ENCODE measurements at regions of chr19 and their contacts with region 1.

Region 1: GRCh38 chr19:53808710-53809125 is 15.4 kb downstream of the NLRP12 start:
- DNase-seq: no peak
- H3K4me3 ChIP-seq: no peak overlapping the region
- H3K27ac ChIP-seq: no peak overlapping the region
- H3K4me1 ChIP-seq: no peaks in the 10 kb centered on the region; a peak in 1 of 7 replicates
- H3K27me3 ChIP-seq: peaks cover 0 to 5% (median 1%) of the 10 kb centered on the region in 4 experiments; a peak in 4 of 7 replicates
- CTCF ChIP-seq: peak in 2 of 3 experiments; percentile 68 to 77; a peak in 3 of 4 replicates
- EP300 ChIP-seq: no peak
- POLR2A ChIP-seq: no peak
- RAD21 ChIP-seq: peak; percentile 84 to 87

Region 2: GRCh38 chr19:53642381-53643081 is 166.2 kb before region 1 on chr19:
- CTCF ChIA-PET with region 1: no interaction called
- POLR2A ChIA-PET with region 1: no interaction called
- DNase-seq: no peak
- H3K4me3 ChIP-seq: no peak overlapping the region
- H3K27ac ChIP-seq: no peak overlapping the region
- H3K4me1 ChIP-seq: peaks cover 6 to 15% (median 9%) of the 10 kb centered on the region in 4 experiments
- H3K27me3 ChIP-seq: no peaks in the 10 kb centered on the region
- CTCF ChIP-seq: no peak
- EP300 ChIP-seq: no peak
- POLR2A ChIP-seq: no peak
- RAD21 ChIP-seq: no peak

Region 3: DNA sequence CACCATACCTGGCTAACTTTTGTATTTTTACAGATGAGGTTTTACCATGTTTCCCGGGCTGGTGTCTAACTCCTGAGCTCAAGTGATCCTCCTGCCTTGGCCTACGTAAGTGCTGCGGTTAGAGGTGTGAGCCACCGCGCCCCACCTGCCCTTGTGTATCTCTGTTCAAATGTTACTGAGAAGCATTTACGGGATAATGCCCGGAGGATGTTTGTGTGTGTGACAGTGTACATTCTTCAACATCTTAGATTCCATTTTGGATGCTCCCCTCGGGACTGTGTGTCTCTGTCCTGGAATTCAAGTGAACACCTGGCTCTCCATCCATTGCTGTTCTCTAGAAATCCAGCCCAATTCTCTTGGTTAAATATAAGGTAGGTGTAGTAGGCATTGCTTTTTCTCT is 78.3 kb before region 1 on chr19:
- CTCF ChIA-PET with region 1: no interaction called
- POLR2A ChIA-PET with region 1: no interaction called
- DNase-seq: no peak
- H3K4me3 ChIP-seq: no peak overlapping the region
- H3K27ac ChIP-seq: no peak overlapping the region
- H3K4me1 ChIP-seq: no peaks in the 10 kb centered on the region; a peak in 1 of 7 replicates
- H3K27me3 ChIP-seq: no peaks in the 10 kb centered on the region
- CTCF ChIP-seq: no peak
- EP300 ChIP-seq: no peak
- POLR2A ChIP-seq: no peak
- RAD21 ChIP-seq: no peak

Region 4: GRCh38 chr19:53772943-53773342 is 35.8 kb before region 1 on chr19:
- CTCF ChIA-PET with region 1: interaction called, 58 read pairs
- POLR2A ChIA-PET with region 1: interaction called, 3 read pairs
- DNase-seq: peak in 1 of 2 experiments; percentile 78
- H3K4me3 ChIP-seq: peak overlapping the region in 1 of 4 experiments; percentile 10; a peak in 1 of 8 replicates
- H3K27ac ChIP-seq: no peak overlapping the region
- H3K4me1 ChIP-seq: peaks cover 0 to 16% (median 4%) of the 10 kb centered on the region in 4 experiments; a peak in 5 of 7 replicates
- H3K27me3 ChIP-seq: no peaks in the 10 kb centered on the region
- CTCF ChIP-seq: peak; percentile 6 to 80 (median 59)
- EP300 ChIP-seq: no peak
- POLR2A ChIP-seq: no peak
- RAD21 ChIP-seq: peak; percentile 73 to 79

Region 5: GRCh38 chr19:53826876-53827275 is 18.2 kb after region 1 on chr19:
- CTCF ChIA-PET with region 1: interaction called, 49 read pairs
- POLR2A ChIA-PET with region 1: interaction called, 5 read pairs
- DNase-seq: no peak
- H3K4me3 ChIP-seq: no peak overlapping the region
- H3K27ac ChIP-seq: no peak overlapping the region
- H3K4me1 ChIP-seq: peaks cover 0 to 14% (median 2%) of the 10 kb centered on the region in 4 experiments; a peak in 5 of 7 replicates
- H3K27me3 ChIP-seq: no peaks in the 10 kb centered on the region
- CTCF ChIP-seq: no peak
- EP300 ChIP-seq: no peak
- POLR2A ChIP-seq: no peak
- RAD21 ChIP-seq: no peak

Region 6: GRCh38 chr19:53892981-53893325 is 84.2 kb after region 1 on chr19:
- CTCF ChIA-PET with region 1: interaction called, 10 read pairs
- POLR2A ChIA-PET with region 1: interaction called, 3 read pairs
- DNase-seq: no peak
- H3K4me3 ChIP-seq: no peak overlapping the region
- H3K27ac ChIP-seq: no peak overlapping the region
- H3K4me1 ChIP-seq: peaks cover 0 to 10% (median 5%) of the 10 kb centered on the region in 4 experiments; a peak in 5 of 7 replicates
- H3K27me3 ChIP-seq: peaks cover 0 to 3% (median 0%) of the 10 kb centered on the region in 4 experiments; a peak in 1 of 7 replicates
- CTCF ChIP-seq: no peak
- EP300 ChIP-seq: no peak
- POLR2A ChIP-seq: no peak
- RAD21 ChIP-seq: no peak

Region 7: GRCh38 chr19:54029930-54030490 is 221.3 kb after region 1 on chr19:
- CTCF ChIA-PET with region 1: interaction called, 42 read pairs
- POLR2A ChIA-PET with region 1: no interaction called
- DNase-seq: peak; percentile 50 to 86
- H3K4me3 ChIP-seq: no peak overlapping the region
- H3K27ac ChIP-seq: no peak overlapping the region
- H3K4me1 ChIP-seq: peaks cover 2 to 8% (median 4%) of the 10 kb centered on the region in 4 experiments; a peak in 6 of 7 replicates
- H3K27me3 ChIP-seq: no peaks in the 10 kb centered on the region
- CTCF ChIP-seq: peak; percentile 43 to 79 (median 75)
- EP300 ChIP-seq: no peak
- POLR2A ChIP-seq: no peak
- RAD21 ChIP-seq: peak; percentile 82 to 85

Measured in H1 (cell line).